Activated CD4-positive, alpha-beta T cell treated with anti-CD3 and anti-CD28 coated beads for 36 hours (primary cell): ENCODE measurements at regions of chr9 and their contacts with region 1.

Region 1: DNA sequence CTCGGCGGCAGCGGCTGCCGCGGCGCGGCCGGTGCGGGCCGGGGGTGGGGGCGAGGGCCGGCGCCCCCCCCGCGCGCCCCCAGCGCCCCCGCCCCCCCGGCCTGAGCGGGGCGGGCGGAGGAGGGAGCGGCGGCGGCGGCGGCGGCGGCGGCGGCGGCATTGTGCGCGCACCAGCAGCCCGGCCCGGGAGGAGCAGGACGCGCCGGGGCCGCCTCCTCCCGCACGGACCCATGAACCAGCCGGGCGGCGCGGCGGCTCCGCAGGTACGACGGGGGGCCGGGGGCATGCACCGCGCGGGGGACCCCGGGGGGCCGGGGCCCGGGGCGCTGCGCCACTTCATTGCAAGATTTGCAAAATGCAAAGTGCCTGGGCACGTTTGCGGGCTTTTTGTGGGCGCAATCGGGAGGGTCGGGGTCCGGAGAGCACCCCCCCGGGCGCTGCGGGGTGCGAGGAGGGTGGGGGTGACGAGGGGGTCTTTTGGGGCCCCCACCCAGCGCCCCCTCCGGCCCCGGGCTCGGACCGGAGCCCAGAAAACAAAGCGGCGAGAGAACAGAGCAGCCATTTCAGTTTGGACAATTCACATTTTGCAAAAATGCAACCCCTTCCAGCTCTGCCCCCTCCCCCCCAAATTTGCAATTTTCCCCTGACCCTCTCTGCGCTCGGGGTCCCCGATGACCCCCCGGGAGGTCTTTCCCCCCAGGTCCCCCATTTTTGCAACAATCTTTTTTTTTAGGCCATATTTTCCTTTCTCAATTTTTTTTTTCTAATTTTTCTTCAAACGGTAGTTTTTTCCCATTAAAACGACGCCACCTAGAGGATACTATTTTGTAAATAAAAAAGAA is at the start of gene ZNF618:
- DNase-seq: peak; percentile 50
- ATAC-seq: peak; percentile 69
- H3K4me3 Mint-ChIP-seq: peak within 1 kb of the TSS; percentile 85
- H3K27ac Mint-ChIP-seq: peak within 1 kb of the TSS; percentile 75
- H3K4me1 Mint-ChIP-seq: peaks cover 5% of the 10 kb centered on the region
- H3K27me3 Mint-ChIP-seq: peaks cover 17% of the 10 kb centered on the region
- total RNA-seq, gene ZNF618: 0.11 TPM

Region 2: GRCh38 chr9:113210815-113211214 is 665.6 kb before region 1 on chr9:
- CTCF ChIA-PET with region 1: no interaction called
- POLR2A ChIA-PET with region 1: no interaction called
- intact Hi-C with region 1: no loop called
- DNase-seq: no peak
- ATAC-seq: no peak
- H3K4me3 Mint-ChIP-seq: no peak overlapping the region
- H3K27ac Mint-ChIP-seq: no peak overlapping the region
- H3K4me1 Mint-ChIP-seq: peaks cover 7% of the 10 kb centered on the region
- H3K27me3 Mint-ChIP-seq: no peaks in the 10 kb centered on the region

Region 3: GRCh38 chr9:113269355-113269754 is 607.0 kb before region 1 on chr9:
- CTCF ChIA-PET with region 1: no interaction called
- POLR2A ChIA-PET with region 1: no interaction called
- intact Hi-C with region 1: no loop called
- DNase-seq: no peak
- ATAC-seq: peak; percentile 95
- H3K4me3 Mint-ChIP-seq: no peak overlapping the region
- H3K27ac Mint-ChIP-seq: peak overlapping the region; percentile 63
- H3K4me1 Mint-ChIP-seq: peaks cover 27% of the 10 kb centered on the region
- H3K27me3 Mint-ChIP-seq: no peaks in the 10 kb centered on the region

Region 4: DNA sequence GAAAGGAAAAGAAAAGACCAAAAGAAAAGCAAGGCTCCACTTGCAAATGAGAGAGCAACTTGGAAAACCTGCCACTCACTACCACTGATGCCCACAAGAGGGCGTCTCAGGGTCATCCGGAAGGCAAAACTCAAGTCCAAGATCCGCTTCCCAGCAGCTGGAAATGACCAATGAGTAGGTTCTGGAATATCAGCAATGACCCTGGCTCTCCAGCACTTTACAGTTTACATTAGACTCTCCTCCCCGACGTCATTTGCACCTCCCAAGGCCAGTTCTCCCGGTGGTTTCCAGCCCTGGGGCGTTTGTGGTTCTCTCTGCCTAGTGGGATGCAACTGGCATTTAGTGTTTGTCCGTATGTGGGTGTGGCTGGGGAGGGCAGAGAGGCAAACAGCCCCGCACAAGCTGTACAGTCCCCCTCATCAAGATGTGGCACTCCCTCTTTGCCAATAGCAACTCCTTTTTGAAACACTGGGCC is 194.0 kb before region 1 on chr9:
- CTCF ChIA-PET with region 1: interaction called, 3 read pairs
- POLR2A ChIA-PET with region 1: no interaction called
- intact Hi-C with region 1: loop called in 1 of 2 experiments (anchors 1 kb)
- DNase-seq: peak; percentile 73
- ATAC-seq: no peak
- H3K4me3 Mint-ChIP-seq: no peak overlapping the region
- H3K27ac Mint-ChIP-seq: no peak overlapping the region
- H3K4me1 Mint-ChIP-seq: peaks cover 2% of the 10 kb centered on the region
- H3K27me3 Mint-ChIP-seq: peaks cover 38% of the 10 kb centered on the region

Region 5: DNA sequence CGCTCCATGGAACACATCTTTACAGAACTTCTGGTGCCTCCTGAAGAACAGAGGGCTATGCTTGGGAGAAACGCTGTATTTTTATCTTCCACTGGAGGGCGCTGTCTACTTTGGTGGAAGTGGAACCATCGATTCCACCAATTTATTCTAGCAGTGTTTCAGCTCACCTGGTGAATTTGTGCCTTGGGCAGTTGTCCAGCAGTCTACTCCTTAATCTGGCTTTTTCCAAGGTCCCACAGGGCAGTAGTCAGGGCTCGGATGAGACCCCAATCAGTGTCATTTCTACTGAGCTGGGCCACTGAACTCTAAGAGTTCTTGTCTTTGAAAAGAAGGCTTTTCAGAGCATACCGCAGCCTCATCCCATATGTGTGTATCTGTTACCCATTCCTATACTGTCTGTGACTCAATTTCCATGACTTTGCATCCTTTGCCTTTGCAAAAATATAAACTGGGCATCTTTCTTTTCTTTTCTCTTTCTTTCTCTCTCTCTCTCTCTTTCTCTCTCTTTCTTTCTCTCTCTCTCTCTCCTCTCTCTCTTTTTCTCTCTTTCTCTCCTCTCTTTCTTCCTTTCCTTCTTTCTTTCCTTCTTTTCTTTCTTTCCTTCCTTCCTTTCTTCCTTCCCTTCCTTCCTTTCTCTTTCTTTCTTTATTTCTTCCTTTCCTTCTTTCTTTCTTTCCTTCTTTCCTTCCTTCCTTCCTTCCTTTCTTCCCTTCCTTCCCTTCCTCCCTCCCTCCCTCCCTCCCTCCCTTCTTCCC is 138.7 kb before region 1 on chr9:
- CTCF ChIA-PET with region 1: interaction called, 4 read pairs
- POLR2A ChIA-PET with region 1: no interaction called
- intact Hi-C with region 1: loop called in 1 of 2 experiments (anchors 1 kb)
- DNase-seq: peak; percentile 54
- ATAC-seq: no peak
- H3K4me3 Mint-ChIP-seq: no peak overlapping the region
- H3K27ac Mint-ChIP-seq: no peak overlapping the region
- H3K4me1 Mint-ChIP-seq: no peaks in the 10 kb centered on the region
- H3K27me3 Mint-ChIP-seq: peaks cover 7% of the 10 kb centered on the region

Region 6: GRCh38 chr9:113807173-113808061 is 69.0 kb before region 1 on chr9:
- CTCF ChIA-PET with region 1: interaction called, 5 read pairs
- POLR2A ChIA-PET with region 1: no interaction called
- intact Hi-C with region 1: loop called (anchors 1 to 2 kb)
- DNase-seq: peak; percentile 58
- ATAC-seq: no peak
- H3K4me3 Mint-ChIP-seq: no peak overlapping the region
- H3K27ac Mint-ChIP-seq: no peak overlapping the region
- H3K4me1 Mint-ChIP-seq: peaks cover 2% of the 10 kb centered on the region
- H3K27me3 Mint-ChIP-seq: peaks cover 12% of the 10 kb centered on the region